Activated CD4-positive, alpha-beta memory T cell treated with anti-CD3 and anti-CD28 coated beads, Interleukin-2, amount 10 ng/mL, durations not matched to agents 7 days and 5 days (primary cell): ENCODE measurements at regions of chr18 and their contacts with region 1.

Region 1: GRCh38 chr18:21612125-21612991 is at the start of gene SNRPD1:
- DNase-seq: peak; percentile 91
- H3K4me3 Mint-ChIP-seq: peak within 1 kb of the TSS; percentile 92
- H3K27ac Mint-ChIP-seq: peak within 1 kb of the TSS; percentile 94
- H3K4me1 Mint-ChIP-seq: peaks cover 39% of the 10 kb centered on the region
- H3K27me3 Mint-ChIP-seq: no peaks in the 10 kb centered on the region
- total RNA-seq, gene SNRPD1: 96.6 to 97.5 TPM

Region 2: DNA sequence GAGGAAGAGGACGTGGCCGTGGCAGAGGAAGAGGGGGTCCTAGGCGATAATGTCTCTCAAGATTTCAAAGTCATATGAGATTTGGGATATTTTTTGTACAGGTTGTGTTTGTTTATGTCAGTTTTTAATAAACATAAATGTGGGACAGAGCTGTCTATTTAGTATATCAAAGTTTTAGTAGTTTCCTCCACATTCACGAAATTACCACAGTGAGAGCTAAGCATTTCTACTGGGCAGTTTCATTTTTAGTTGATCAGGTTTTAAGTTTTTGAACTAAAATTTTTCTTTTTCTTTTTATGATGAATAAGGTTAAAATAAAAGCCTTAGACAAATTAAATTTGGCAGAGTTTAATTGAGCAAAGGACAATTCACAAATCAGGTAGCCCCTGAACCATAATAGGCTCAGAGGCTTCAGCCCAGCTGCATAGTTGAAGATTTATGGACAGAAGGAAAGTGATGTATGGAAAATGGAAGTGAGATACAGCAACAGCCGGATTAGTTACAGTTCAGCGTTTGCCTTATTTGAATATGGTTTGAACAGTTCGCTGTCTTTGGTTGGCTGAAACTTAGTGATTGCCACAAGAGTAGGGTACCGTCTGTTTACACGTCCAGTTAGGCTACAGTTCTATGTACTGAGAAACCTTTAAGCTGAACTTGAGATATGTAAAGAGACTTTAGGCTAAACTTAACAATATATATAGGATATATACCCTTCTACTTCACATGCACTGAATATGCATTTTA is 16.9 kb after region 1 on chr18:
- CTCF ChIA-PET with region 1: interaction called, 5 read pairs
- POLR2A ChIA-PET with region 1: interaction called, 10 read pairs
- DNase-seq: no peak
- H3K4me3 Mint-ChIP-seq: peak overlapping the region; percentile 0
- H3K27ac Mint-ChIP-seq: peak overlapping the region; percentile 71
- H3K4me1 Mint-ChIP-seq: peaks cover 21% of the 10 kb centered on the region
- H3K27me3 Mint-ChIP-seq: no peaks in the 10 kb centered on the region

Region 3: DNA sequence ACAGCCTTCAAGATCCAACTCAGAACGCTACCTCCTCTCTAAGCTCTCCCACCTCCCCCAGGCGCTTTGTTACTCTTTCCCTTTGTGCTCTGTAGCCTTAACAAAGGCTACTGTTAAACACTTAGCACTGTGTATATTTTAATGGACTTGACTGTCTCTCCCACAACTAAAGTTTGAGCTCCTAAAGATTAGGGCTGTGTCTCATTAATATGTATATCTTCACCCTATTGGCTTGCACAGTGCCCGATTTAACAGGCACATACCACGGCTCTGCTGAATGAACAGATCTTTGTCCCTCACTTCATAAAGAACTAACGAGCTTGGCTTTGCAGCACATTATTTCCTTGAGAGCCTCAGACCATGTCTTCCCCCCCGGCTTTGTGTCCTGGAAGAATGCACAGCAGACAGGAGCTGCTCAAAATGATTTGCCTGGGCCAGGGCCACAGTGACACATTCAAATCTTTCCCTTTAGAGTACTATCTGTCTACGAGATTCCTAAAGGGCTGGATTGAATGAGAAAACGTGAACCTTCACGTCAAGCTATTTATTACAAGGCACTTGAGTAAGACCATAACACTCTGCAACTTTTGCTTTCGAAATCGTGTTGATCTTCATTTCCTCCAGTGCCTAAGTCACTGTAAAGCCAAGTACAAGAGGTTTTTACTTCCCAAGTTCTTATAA is 70.2 kb after region 1 on chr18:
- CTCF ChIA-PET with region 1: interaction called, 9 read pairs
- POLR2A ChIA-PET with region 1: interaction called, 13 read pairs
- DNase-seq: peak; percentile 28
- H3K4me3 Mint-ChIP-seq: no peak overlapping the region
- H3K27ac Mint-ChIP-seq: no peak overlapping the region
- H3K4me1 Mint-ChIP-seq: peaks cover 15% of the 10 kb centered on the region
- H3K27me3 Mint-ChIP-seq: no peaks in the 10 kb centered on the region

Region 4: GRCh38 chr18:21740724-21741510 is 128.6 kb after region 1 on chr18 and contains the start of gene MIB1:
- CTCF ChIA-PET with region 1: interaction called, 5 read pairs
- POLR2A ChIA-PET with region 1: interaction called, 13 read pairs
- DNase-seq: no peak
- H3K4me3 Mint-ChIP-seq: peak within 1 kb of the TSS; percentile 92
- H3K27ac Mint-ChIP-seq: peak within 1 kb of the TSS; percentile 93
- H3K4me1 Mint-ChIP-seq: peaks cover 53% of the 10 kb centered on the region
- H3K27me3 Mint-ChIP-seq: peaks cover 5% of the 10 kb centered on the region
- total RNA-seq, gene MIB1: 57.8 to 58.3 TPM